Sciatic nerve (tissue), 2 donors: ENCODE measurements at regions of chr12 and their contacts with region 1.

Region 1: GRCh38 chr12:57657744-57658143 is 24.7 kb upstream of the B4GALNT1 start:
- DNase-seq: no peak
- ATAC-seq: peak; percentile 83

Region 2: DNA sequence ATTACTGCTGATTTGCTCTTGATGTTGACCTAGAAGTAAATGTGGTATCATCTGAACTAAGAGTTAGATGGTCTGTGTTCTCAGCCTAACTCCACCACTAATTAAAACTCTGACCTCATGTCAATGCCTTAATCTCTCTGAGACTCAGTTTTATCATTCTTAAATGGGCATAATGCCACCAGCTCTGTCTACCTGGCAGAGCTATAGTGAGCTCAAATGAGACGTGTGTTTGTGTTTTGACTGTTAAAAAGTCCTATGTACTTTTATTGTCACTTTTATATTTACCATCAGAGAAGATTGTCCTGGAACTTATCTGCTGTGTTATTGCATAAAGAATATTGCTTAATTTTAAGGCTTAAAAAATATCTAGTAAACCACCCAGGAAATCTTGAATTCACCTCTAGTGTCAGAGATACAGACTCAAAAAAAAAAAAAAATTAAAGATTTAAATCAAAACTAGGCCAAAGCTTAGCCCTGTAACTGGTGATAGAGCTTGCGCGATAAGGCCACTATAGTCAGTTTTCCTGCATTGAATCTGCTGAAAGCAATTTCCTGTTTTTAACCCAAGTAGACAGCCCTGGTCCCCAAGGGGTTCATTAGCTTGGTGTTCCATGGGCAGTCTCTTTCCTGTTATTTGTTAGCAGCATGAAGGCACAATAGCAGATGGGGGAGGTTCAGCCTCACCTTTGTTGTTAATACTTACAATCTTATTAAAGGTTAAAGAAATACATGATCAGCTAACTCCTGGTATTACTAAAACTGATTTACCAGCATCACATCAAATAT is 545.4 kb after region 1 on chr12:
- intact Hi-C with region 1: loop called (anchors 10 kb)
- DNase-seq: no peak
- ATAC-seq: no peak